ENCODE measurements at regions of chr10 and their contacts with region 1.

Region 1: GRCh38 chr10:68156373-68157185 is 47.3 kb downstream of the MYPN start:
- DNase-seq: peak; percentile 12 to 63 (median 43)
- ATAC-seq: peak; percentile 85
- H3K4me3 ChIP-seq: no peak overlapping the region
- H3K4me3 Mint-ChIP-seq: no peak overlapping the region
- H3K27ac ChIP-seq: no peak overlapping the region
- H3K27ac Mint-ChIP-seq: no peak overlapping the region
- H3K4me1 ChIP-seq: no peaks in the 10 kb centered on the region
- H3K4me1 Mint-ChIP-seq: peaks cover 0 to 5% (median 0%) of the 10 kb centered on the region in 7 donors
- H3K27me3 ChIP-seq: no peaks in the 10 kb centered on the region
- H3K27me3 Mint-ChIP-seq: peaks cover 0 to 4% (median 2%) of the 10 kb centered on the region in 5 donors

Region 2: GRCh38 chr10:66762218-66762729 is 1394.3 kb before region 1 on chr10:
- CTCF ChIA-PET with region 1: no interaction called
- POLR2A ChIA-PET with region 1: no interaction called
- intact Hi-C with region 1: no loop called
- DNase-seq: no peak
- ATAC-seq: no peak
- H3K4me3 ChIP-seq: no peak overlapping the region
- H3K4me3 Mint-ChIP-seq: no peak overlapping the region
- H3K27ac ChIP-seq: no peak overlapping the region
- H3K27ac Mint-ChIP-seq: no peak overlapping the region
- H3K4me1 ChIP-seq: no peaks in the 10 kb centered on the region
- H3K4me1 Mint-ChIP-seq: no peaks in the 10 kb centered on the region
- H3K27me3 ChIP-seq: no peaks in the 10 kb centered on the region
- H3K27me3 Mint-ChIP-seq: no peaks in the 10 kb centered on the region

Region 3: GRCh38 chr10:67697724-67698131 is 458.9 kb before region 1 on chr10:
- CTCF ChIA-PET with region 1: interaction called, 3 read pairs
- POLR2A ChIA-PET with region 1: no interaction called
- intact Hi-C with region 1: loop called (anchors 5 to 10 kb)
- DNase-seq: peak in 7 of 9 donors; percentile 34 to 68 (median 56)
- ATAC-seq: peak; percentile 88
- H3K4me3 ChIP-seq: no peak overlapping the region
- H3K4me3 Mint-ChIP-seq: no peak overlapping the region
- H3K27ac ChIP-seq: no peak overlapping the region
- H3K27ac Mint-ChIP-seq: peak overlapping the region in 1 of 9 donors; percentile 56
- H3K4me1 ChIP-seq: no peaks in the 10 kb centered on the region
- H3K4me1 Mint-ChIP-seq: peaks cover 0 to 15% (median 5%) of the 10 kb centered on the region in 7 donors
- H3K27me3 ChIP-seq: no peaks in the 10 kb centered on the region
- H3K27me3 Mint-ChIP-seq: peaks cover 4 to 41% (median 29%) of the 10 kb centered on the region in 5 donors

Region 4: DNA sequence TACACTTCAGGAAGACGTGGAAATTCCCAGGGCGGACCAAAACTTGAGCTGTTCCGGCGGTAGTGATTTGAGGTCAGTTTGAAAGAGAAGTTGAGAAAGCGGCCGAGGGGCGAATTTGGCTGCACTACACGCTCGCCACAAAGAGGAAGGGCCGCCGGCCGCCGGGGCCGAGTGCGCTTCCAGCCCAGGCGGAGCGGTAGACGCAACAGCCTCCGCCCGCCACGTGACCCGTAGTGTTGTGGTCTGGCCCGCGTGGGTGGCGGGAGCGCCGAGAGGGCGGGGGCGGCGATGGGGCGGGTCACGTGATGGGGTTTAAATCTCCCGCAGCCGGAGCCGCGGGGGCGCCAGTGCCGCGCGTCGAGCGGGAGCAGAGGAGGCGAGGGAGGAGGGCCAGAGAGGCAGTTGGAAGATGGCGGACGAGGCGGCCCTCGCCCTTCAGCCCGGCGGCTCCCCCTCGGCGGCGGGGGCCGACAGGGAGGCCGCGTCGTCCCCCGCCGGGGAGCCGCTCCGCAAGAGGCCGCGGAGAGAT is 272.2 kb before region 1 on chr10 and contains the start of gene SIRT1:
- CTCF ChIA-PET with region 1: no interaction called
- POLR2A ChIA-PET with region 1: no interaction called
- intact Hi-C with region 1: loop called (anchors 1 kb)
- DNase-seq: peak; percentile 87 to 95 (median 90)
- ATAC-seq: peak; percentile 89
- H3K4me3 ChIP-seq: peak within 1 kb of the TSS; percentile 75
- H3K4me3 Mint-ChIP-seq: peak within 1 kb of the TSS; percentile 86 to 98 (median 95)
- H3K27ac ChIP-seq: peak within 1 kb of the TSS; percentile 83
- H3K27ac Mint-ChIP-seq: peak within 1 kb of the TSS; percentile 90 to 98 (median 95)
- H3K4me1 ChIP-seq: peaks cover 12 to 16% of the 10 kb centered on the region in 2 donors
- H3K4me1 Mint-ChIP-seq: peaks cover 27 to 43% (median 35%) of the 10 kb centered on the region in 7 donors
- H3K27me3 ChIP-seq: no peaks in the 10 kb centered on the region
- H3K27me3 Mint-ChIP-seq: peaks cover 0 to 5% (median 0%) of the 10 kb centered on the region in 5 donors
- total RNA-seq, gene SIRT1: 25.9 to 66.8 (median 59.5) TPM

Region 5: DNA sequence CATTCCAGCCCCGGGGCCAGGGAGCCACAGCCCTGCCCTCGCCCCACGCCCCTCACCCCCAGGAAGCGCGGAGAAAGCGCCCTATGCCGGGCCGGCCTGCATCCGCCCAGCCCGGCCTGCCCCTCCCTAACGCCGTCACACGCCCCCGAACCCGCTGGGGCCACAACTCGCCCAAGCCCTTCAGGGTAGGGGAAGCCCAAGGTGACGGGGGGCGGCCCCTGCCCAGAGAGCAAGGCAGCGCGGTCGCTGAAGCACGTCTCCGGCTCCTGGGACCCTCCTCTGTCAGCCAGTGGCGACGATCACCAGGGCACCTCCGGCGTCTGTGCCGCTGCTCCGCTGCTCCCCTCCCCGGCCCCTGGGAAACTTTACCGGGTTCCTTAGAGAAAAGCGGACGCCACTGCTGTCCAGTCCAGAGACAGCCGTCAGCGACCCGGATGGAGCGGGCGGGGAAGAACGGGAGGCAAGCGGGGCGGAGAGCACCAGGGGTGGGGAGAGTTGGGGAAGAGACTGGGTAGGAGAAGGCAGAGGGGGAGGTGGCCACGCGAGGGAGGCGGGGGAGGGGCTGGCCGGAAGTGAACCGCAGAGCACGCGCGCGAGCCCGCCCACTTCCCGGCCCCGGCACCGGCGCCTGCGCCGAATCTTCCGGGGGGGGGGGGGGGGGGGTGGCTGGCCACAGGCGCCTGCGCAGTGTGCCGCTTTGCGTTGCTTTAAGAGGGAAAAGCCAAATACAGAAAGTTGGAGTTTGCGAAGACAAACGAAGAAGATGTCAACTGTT is 81.6 kb before region 1 on chr10 and contains the start of gene HERC4:
- CTCF ChIA-PET with region 1: no interaction called
- POLR2A ChIA-PET with region 1: interaction called, 3 read pairs
- intact Hi-C with region 1: loop called in 1 of 2 experiments (anchors 5 kb)
- DNase-seq: peak; percentile 80 to 91 (median 89)
- ATAC-seq: peak; percentile 97
- H3K4me3 ChIP-seq: peak within 1 kb of the TSS; percentile 91
- H3K4me3 Mint-ChIP-seq: peak within 1 kb of the TSS; percentile 91 to 98 (median 96)
- H3K27ac ChIP-seq: peak within 1 kb of the TSS; percentile 96
- H3K27ac Mint-ChIP-seq: peak within 1 kb of the TSS; percentile 89 to 95 (median 94)
- H3K4me1 ChIP-seq: peaks cover 15 to 21% of the 10 kb centered on the region in 2 donors
- H3K4me1 Mint-ChIP-seq: peaks cover 26 to 51% (median 41%) of the 10 kb centered on the region in 7 donors
- H3K27me3 ChIP-seq: peaks cover 0 to 3% of the 10 kb centered on the region in 2 donors
- H3K27me3 Mint-ChIP-seq: peaks cover 0 to 2% (median 0%) of the 10 kb centered on the region in 5 donors
- total RNA-seq, gene HERC4: 65.7 to 113 (median 78.6) TPM

Region 6: DNA sequence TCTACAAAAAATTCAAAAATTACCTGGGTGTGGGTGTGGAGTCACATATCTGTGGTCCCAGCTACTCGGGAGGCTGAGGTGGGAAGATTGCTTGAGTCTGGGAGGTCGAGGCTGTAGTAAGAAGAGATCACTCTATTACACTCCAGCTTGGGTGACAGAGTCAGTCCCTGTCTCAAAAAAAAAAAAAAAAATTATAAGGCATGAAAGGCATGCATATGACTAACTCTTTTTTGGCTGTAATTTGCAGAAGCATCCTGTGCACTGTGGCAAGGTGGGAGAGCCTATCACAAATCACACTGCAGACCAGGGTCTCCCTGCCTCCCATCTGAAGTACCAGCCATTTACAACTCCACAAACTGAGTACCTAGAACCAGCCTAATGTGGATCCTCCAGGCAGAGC is 61.4 kb before region 1 on chr10:
- CTCF ChIA-PET with region 1: no interaction called
- POLR2A ChIA-PET with region 1: no interaction called
- intact Hi-C with region 1: no loop called
- DNase-seq: no peak
- ATAC-seq: no peak
- H3K4me3 ChIP-seq: no peak overlapping the region
- H3K4me3 Mint-ChIP-seq: no peak overlapping the region
- H3K27ac ChIP-seq: no peak overlapping the region
- H3K27ac Mint-ChIP-seq: no peak overlapping the region
- H3K4me1 ChIP-seq: no peaks in the 10 kb centered on the region
- H3K4me1 Mint-ChIP-seq: peaks cover 0 to 1% (median 0%) of the 10 kb centered on the region in 7 donors
- H3K27me3 ChIP-seq: no peaks in the 10 kb centered on the region
- H3K27me3 Mint-ChIP-seq: no peaks in the 10 kb centered on the region

Region 7: DNA sequence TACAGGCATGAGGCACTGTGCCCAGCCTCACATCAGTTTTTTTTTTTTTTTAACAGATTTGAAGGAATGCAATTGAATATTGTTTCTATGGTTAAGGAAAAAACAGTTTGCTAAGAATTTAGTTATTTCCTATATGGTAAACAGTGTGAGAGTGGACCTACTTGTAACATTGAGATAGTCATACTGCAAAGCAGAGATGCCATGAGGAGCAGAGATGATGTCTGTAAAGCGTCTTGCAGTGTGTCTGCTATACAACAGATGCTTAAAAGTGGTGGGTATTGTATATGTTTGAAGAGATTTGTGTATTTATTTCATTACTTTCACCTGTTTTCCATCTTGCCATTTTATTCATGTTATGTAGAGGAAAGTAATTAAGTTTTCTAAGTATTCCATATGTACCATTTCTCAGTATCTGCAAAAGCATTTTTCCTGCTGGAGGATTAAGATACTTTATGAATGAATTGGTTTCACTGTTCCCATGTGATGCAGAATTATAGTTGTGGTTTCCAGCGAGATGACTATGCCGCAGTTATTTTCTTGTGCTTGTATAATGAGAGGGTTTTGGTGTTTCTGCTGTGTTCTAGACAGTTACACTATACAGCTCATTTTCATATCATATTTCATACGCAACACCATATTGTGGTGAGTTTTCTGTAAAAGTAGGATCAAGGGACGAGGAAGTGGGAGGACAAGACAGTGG is 430.2 kb after region 1 on chr10:
- CTCF ChIA-PET with region 1: no interaction called
- POLR2A ChIA-PET with region 1: no interaction called
- intact Hi-C with region 1: no loop called
- DNase-seq: no peak
- ATAC-seq: no peak
- H3K4me3 ChIP-seq: no peak overlapping the region
- H3K4me3 Mint-ChIP-seq: no peak overlapping the region
- H3K27ac ChIP-seq: no peak overlapping the region
- H3K27ac Mint-ChIP-seq: peak overlapping the region in 1 of 9 donors; percentile 5
- H3K4me1 ChIP-seq: no peaks in the 10 kb centered on the region
- H3K4me1 Mint-ChIP-seq: peaks cover 0 to 8% (median 3%) of the 10 kb centered on the region in 7 donors
- H3K27me3 ChIP-seq: no peaks in the 10 kb centered on the region
- H3K27me3 Mint-ChIP-seq: peaks cover 0 to 3% (median 0%) of the 10 kb centered on the region in 5 donors